CD4-positive, alpha-beta T cell (primary cell): ENCODE measurements at regions of chr11 and their contacts with region 1.

Region 1: GRCh38 chr11:95688580-95689189 is 100.9 kb downstream of the FAM76B start:
- DNase-seq: peak in 3 of 14 experiments; percentile 61 to 81 (median 68)
- ATAC-seq: peak; percentile 78
- H3K4me3 ChIP-seq: no peak overlapping the region
- H3K4me3 Mint-ChIP-seq: no peak overlapping the region
- H3K27ac ChIP-seq: peak overlapping the region; percentile 57 to 60
- H3K27ac Mint-ChIP-seq: no peak overlapping the region
- H3K4me1 ChIP-seq: peaks cover 19% of the 10 kb centered on the region
- H3K4me1 Mint-ChIP-seq: peaks cover 27% of the 10 kb centered on the region
- H3K27me3 ChIP-seq: no peaks in the 10 kb centered on the region
- H3K27me3 Mint-ChIP-seq: no peaks in the 10 kb centered on the region
- CTCF ChIP-seq: no peak

Region 2: DNA sequence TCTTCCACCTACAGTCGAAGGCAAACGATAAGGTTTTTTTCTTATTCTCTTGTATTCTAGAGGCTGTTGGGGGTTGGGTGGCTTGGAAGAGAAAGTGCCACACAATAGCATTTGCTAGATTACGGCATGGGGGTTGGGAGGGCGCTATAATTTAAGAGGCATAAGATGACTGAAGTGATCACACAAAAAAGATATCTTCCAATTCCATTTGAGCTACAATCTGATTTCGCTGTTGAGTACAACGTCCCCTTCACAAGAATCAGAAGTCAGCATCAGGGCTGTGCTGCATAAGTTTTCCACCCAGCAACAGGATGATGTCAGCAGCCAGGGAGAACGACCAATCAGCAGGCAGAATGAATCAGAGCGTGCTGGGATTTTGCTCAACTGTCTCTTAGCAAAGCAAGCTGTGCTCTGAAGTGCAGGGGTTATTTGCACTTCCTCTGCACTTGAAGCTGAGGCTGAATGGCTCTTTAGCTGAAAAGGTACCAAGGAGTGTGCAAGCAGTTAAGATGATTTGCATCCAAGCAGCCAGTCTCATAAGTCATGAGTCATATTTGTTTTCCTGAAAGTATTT is 434.5 kb before region 1 on chr11:
- CTCF ChIA-PET with region 1: no interaction called
- POLR2A ChIA-PET with region 1: no interaction called
- intact Hi-C with region 1: loop called in 1 of 2 experiments (anchors 1 kb)
- DNase-seq: peak; percentile 64 to 93 (median 74)
- ATAC-seq: peak; percentile 98
- H3K4me3 ChIP-seq: peak overlapping the region; percentile 53
- H3K4me3 Mint-ChIP-seq: peak overlapping the region; percentile 92
- H3K27ac ChIP-seq: peak overlapping the region; percentile 53 to 58
- H3K27ac Mint-ChIP-seq: peak overlapping the region; percentile 92
- H3K4me1 ChIP-seq: peaks cover 31% of the 10 kb centered on the region
- H3K4me1 Mint-ChIP-seq: peaks cover 55% of the 10 kb centered on the region
- H3K27me3 ChIP-seq: no peaks in the 10 kb centered on the region
- H3K27me3 Mint-ChIP-seq: no peaks in the 10 kb centered on the region
- CTCF ChIP-seq: no peak

Region 3: GRCh38 chr11:95699631-95700470 is 11.2 kb after region 1 on chr11:
- CTCF ChIA-PET with region 1: interaction called, 18 read pairs
- POLR2A ChIA-PET with region 1: interaction called, 42 read pairs
- intact Hi-C with region 1: loop called in 1 of 2 experiments (anchors 1 kb)
- DNase-seq: peak in 4 of 14 experiments; percentile 33 to 60 (median 52)
- ATAC-seq: peak; percentile 82
- H3K4me3 ChIP-seq: peak overlapping the region; percentile 45
- H3K4me3 Mint-ChIP-seq: peak overlapping the region; percentile 66
- H3K27ac ChIP-seq: peak overlapping the region; percentile 78 to 87
- H3K27ac Mint-ChIP-seq: peak overlapping the region; percentile 92
- H3K4me1 ChIP-seq: peaks cover 56% of the 10 kb centered on the region
- H3K4me1 Mint-ChIP-seq: peaks cover 48% of the 10 kb centered on the region
- H3K27me3 ChIP-seq: no peaks in the 10 kb centered on the region
- H3K27me3 Mint-ChIP-seq: no peaks in the 10 kb centered on the region
- CTCF ChIP-seq: no peak

Region 4: GRCh38 chr11:95705485-95706124 is 16.9 kb after region 1 on chr11:
- CTCF ChIA-PET with region 1: interaction called, 18 read pairs
- POLR2A ChIA-PET with region 1: interaction called, 42 read pairs
- intact Hi-C with region 1: loop called in 1 of 2 experiments (anchors 1 kb)
- DNase-seq: peak; percentile 76 to 93 (median 85)
- ATAC-seq: peak; percentile 92
- H3K4me3 ChIP-seq: no peak overlapping the region
- H3K4me3 Mint-ChIP-seq: no peak overlapping the region
- H3K27ac ChIP-seq: peak overlapping the region; percentile 33 to 54
- H3K27ac Mint-ChIP-seq: no peak overlapping the region
- H3K4me1 ChIP-seq: peaks cover 33% of the 10 kb centered on the region
- H3K4me1 Mint-ChIP-seq: peaks cover 11% of the 10 kb centered on the region
- H3K27me3 ChIP-seq: no peaks in the 10 kb centered on the region
- H3K27me3 Mint-ChIP-seq: no peaks in the 10 kb centered on the region
- CTCF ChIP-seq: peak; percentile 94